ENCODE measurements at regions of chr11 and their contacts with region 1.

Region 1: DNA sequence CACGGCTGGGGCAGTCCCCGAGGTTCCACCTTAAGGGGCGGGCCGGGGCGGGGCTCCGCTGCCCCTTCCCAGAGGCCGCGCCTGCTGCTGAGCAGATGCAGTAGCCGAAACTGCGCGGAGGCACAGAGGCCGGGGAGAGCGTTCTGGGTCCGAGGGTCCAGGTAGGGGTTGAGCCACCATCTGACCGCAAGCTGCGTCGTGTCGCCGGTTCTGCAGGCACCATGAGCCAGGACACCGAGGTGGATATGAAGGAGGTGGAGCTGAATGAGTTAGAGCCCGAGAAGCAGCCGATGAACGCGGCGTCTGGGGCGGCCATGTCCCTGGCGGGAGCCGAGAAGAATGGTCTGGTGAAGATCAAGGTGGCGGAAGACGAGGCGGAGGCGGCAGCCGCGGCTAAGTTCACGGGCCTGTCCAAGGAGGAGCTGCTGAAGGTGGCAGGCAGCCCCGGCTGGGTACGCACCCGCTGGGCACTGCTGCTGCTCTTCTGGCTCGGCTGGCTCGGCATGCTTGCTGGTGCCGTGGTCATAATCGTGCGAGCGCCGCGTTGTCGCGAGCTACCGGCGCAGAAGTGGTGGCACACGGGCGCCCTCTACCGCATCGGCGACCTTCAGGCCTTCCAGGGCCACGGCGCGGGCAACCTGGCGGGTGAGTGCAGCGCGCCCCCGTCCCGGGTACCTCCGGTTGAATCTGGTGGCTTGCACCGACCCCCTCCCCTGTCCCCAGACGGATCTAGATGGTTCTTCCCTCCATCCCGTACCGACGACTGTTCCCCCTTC is at the start of gene SLC3A2:
- DNase-seq: peak; percentile 94
- H3K4me3 ChIP-seq: peak within 1 kb of the TSS; percentile 72
- H3K27ac ChIP-seq: peak within 1 kb of the TSS; percentile 98
- H3K4me1 ChIP-seq: peaks cover 46% of the 10 kb centered on the region
- H3K27me3 ChIP-seq: no peaks in the 10 kb centered on the region
- CTCF ChIP-seq: peak; percentile 92
- total RNA-seq, gene SLC3A2: 480 and 511 TPM in 2 replicates

Region 2: DNA sequence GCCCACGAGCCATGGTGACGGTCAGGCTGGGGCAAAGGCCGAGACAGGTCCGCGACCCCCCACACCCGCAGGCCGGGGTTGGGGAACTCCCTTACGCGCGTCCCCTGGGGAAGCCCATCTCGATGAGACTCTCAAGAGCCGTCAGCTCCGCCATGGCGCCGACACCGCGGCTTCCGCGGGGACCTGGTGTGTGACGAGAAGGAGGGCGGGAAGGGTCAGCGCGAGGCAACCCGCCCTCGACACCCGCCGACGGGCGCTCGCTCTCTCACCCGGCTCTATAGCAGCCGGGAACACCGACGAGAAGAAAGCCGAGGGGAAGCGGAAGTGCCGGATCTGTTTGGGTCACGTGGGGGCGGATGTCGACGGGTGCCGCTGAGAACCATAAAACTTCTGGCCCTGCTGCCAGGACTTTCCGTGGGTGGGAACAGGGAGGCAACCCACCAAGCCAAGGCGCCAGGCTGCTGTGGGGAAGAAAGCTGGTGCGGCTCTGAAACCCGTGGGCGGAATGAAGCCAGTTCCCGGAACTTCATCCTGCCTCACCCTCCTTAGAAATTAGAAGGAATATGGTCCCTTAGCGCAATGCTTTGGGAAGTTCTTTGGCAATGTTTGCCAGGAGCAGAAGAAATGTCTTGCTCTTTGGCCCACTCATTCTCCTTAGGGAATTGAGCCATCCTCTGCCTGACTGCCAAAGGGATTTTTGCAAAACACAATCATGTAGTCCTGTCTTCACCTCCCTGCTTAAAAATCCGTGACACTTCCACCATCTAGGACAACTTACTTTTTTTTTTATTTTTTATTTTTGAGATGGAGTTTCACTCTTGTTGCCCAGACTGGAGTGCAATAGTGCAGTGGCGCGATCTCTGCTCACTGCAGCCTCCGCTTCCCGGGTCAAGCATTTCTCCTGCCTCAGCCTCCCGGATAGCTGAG is 202.0 kb before region 1 on chr11 and contains the start of gene UBXN1:
- CTCF ChIA-PET with region 1: interaction called, 14 read pairs
- POLR2A ChIA-PET with region 1: no interaction called
- intact Hi-C with region 1: no loop called
- DNase-seq: peak; percentile 98
- H3K4me3 ChIP-seq: peak within 1 kb of the TSS; percentile 85
- H3K27ac ChIP-seq: peak within 1 kb of the TSS; percentile 84
- H3K4me1 ChIP-seq: peaks cover 23% of the 10 kb centered on the region
- H3K27me3 ChIP-seq: no peaks in the 10 kb centered on the region
- CTCF ChIP-seq: no peak
- total RNA-seq, gene UBXN1: 143 and 147 TPM in 2 replicates

Region 3: DNA sequence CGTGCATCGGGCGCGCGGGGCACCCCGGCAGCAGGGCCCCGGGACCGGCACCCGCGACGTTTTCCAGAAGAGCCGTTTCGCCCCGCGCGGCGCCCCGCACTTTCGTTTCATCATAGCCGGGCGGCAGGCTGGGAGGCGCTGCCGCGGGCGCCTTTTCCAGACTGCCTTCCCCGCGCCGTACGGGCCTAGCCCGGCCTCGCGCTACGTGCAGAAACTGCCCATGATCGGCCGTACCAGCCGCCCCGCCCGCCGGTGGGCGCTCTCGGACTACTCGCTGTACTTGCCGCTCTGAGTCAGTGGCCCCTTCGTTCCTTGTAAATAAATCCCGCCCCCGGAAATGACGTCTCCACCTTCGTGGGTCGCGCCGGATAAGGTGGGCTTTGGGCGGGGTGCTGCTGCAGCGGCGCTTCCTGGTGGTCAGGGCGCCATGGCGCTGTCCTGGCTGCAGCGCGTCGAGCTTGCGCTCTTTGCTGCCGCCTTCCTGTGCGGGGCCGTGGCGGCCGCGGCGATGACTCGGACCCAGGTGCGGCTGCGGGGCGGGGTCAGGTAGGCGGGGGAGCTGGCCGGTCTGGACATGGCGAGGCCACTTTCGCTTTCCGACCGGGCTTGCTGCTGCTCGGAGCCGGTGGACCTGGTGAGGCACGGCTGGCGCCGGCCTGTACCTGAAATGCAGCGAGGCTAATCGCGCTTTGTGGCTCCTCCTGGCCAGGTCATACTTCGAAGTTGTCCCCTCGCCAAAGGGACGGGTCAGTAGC is 93.8 kb before region 1 on chr11 and contains the start of gene TMEM179B:
- CTCF ChIA-PET with region 1: no interaction called
- POLR2A ChIA-PET with region 1: interaction called, 13 read pairs
- intact Hi-C with region 1: loop called (anchors 5 kb)
- DNase-seq: peak; percentile 100
- H3K4me3 ChIP-seq: peak within 1 kb of the TSS; percentile 74
- H3K27ac ChIP-seq: peak within 1 kb of the TSS; percentile 92
- H3K4me1 ChIP-seq: peaks cover 25% of the 10 kb centered on the region
- H3K27me3 ChIP-seq: no peaks in the 10 kb centered on the region
- CTCF ChIP-seq: peak; percentile 64
- total RNA-seq, gene TMEM179B: 46.6 and 52.1 TPM in 2 replicates

Region 4: DNA sequence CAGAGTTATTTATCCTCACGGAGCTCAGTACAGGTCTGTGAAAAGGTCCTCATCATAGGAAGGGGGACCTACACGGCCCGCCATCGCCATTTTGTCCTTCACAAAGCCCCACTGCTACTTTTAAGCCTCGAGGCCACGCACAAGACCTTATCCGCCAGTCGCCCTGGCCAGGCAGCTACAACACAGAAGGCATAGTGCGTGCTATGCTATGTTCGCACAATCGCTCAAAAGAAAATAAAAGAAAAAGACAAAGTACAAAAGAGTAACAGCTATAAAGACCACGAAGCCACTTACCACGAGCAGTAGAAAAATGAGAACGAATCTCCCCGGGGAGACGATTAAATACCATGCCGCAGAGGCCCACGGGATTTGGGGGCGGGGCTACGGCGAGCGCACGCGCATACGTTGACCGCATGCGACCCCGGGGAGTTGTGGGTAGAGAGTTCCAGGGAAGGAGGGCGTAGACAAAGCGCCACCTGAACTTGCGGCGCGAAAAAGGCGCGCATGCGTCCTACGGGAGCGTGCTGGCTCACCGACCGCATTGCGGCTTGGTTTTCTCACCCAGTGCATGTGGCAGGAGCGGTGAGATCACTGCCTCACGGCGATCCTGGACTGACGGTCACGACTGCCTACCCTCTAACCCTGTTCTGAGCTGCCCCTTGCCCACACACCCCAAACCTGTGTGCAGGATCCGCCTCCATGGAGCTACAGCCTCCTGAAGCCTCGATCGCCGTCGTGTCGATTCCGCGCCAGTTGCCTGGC is 25.2 kb before region 1 on chr11:
- CTCF ChIA-PET with region 1: interaction called, 3 read pairs
- POLR2A ChIA-PET with region 1: interaction called, 18 read pairs
- intact Hi-C with region 1: no loop called
- DNase-seq: peak; percentile 99
- H3K4me3 ChIP-seq: peak overlapping the region; percentile 70
- H3K27ac ChIP-seq: peak overlapping the region; percentile 92
- H3K4me1 ChIP-seq: peaks cover 13% of the 10 kb centered on the region
- H3K27me3 ChIP-seq: no peaks in the 10 kb centered on the region
- CTCF ChIP-seq: no peak

Region 5: DNA sequence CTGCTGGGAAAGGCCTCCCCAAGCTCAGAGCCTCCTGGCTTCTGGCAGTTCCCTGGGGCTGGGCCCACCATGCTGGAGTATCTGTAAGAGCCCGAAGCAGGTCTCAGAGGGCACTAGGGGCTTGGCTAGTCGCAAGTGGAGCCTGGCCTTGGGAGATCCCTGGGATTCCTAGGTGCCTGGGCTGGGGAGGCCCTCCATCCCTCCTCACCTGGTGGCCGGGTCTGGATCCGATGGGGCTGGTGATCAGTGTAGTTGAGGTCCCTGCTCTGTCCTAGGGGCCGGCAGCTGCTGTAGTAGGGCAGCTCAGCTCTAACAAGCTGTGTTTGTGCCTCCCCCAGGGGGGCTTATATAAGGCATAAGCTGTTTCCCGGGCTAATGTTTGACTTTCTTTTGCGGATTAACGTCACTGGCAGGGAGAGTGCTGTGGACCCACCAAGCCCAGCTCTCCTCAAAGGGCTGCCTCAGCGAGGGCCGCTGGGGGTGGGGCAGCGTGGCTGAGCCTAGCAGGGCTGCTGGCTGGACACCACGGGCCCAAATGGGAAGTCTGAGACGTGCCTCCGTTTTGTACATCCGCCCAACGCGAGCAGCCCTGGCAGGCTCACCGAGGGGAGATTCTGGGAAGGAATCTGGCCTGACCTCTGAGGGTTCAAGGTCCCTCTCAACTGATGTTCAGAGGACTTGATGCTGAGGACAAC is 134.7 kb after region 1 on chr11 and contains the start of gene SLC22A8:
- CTCF ChIA-PET with region 1: no interaction called
- POLR2A ChIA-PET with region 1: no interaction called
- intact Hi-C with region 1: no loop called
- DNase-seq: no peak
- H3K4me3 ChIP-seq: no peak within 1 kb of the TSS
- H3K27ac ChIP-seq: no peak within 1 kb of the TSS
- H3K4me1 ChIP-seq: peaks cover 9% of the 10 kb centered on the region
- H3K27me3 ChIP-seq: no peaks in the 10 kb centered on the region
- CTCF ChIP-seq: no peak
- total RNA-seq, gene SLC22A8: not detected in 2 replicates